ENCODE measurements at regions of chr7 and their contacts with region 1.

Region 1: GRCh38 chr7:116165717-116166116 is 44.6 kb upstream of the TES start:
- DNase-seq: no peak
- H3K4me3 Mint-ChIP-seq: no peak overlapping the region
- H3K27ac Mint-ChIP-seq: no peak overlapping the region
- H3K4me1 Mint-ChIP-seq: peaks cover 7% of the 10 kb centered on the region
- H3K27me3 Mint-ChIP-seq: peaks cover 7% of the 10 kb centered on the region
- CTCF ChIP-seq: no peak

Region 2: DNA sequence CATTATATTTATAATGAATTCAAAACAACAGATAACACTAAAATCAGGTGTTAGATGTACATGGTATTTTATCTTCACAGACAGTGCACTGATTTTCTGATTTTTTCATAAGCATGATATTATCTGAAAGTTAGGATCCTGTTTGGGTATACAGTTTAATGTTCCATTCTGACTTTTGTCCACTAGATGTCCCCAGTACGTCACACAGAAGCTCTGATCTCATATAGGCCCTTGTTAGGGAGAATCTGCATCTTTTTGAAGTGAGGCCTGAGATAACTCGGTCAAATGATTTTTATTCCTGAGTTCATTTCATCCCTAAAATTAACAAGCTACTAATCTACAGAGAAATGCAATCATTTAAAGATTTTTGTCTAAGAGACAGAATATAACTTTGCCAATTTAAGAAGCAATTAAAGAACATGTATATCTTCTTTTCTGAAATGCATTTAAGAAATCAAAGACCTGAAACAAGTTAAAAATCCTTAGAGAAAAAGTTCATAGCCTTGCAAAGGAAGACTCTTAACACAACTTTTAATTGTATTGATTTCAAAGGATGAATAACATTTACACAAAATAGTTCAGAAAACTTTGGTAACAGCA is 27.4 kb before region 1 on chr7:
- CTCF ChIA-PET with region 1: interaction called, 13 read pairs
- POLR2A ChIA-PET with region 1: no interaction called
- intact Hi-C with region 1: no loop called
- DNase-seq: peak; percentile 72
- H3K4me3 Mint-ChIP-seq: no peak overlapping the region
- H3K27ac Mint-ChIP-seq: no peak overlapping the region
- H3K4me1 Mint-ChIP-seq: peaks cover 12% of the 10 kb centered on the region
- H3K27me3 Mint-ChIP-seq: peaks cover 45% of the 10 kb centered on the region
- CTCF ChIP-seq: peak; percentile 64

Region 3: GRCh38 chr7:116327752-116328151 is 162.0 kb after region 1 on chr7:
- CTCF ChIA-PET with region 1: no interaction called
- POLR2A ChIA-PET with region 1: no interaction called
- intact Hi-C with region 1: no loop called
- DNase-seq: no peak
- H3K4me3 Mint-ChIP-seq: no peak overlapping the region
- H3K27ac Mint-ChIP-seq: no peak overlapping the region
- H3K4me1 Mint-ChIP-seq: peaks cover 7% of the 10 kb centered on the region
- H3K27me3 Mint-ChIP-seq: no peaks in the 10 kb centered on the region
- CTCF ChIP-seq: no peak